MCF 10A (cell line): ENCODE measurements at regions of chr1 and their contacts with region 1.

Region 1: DNA sequence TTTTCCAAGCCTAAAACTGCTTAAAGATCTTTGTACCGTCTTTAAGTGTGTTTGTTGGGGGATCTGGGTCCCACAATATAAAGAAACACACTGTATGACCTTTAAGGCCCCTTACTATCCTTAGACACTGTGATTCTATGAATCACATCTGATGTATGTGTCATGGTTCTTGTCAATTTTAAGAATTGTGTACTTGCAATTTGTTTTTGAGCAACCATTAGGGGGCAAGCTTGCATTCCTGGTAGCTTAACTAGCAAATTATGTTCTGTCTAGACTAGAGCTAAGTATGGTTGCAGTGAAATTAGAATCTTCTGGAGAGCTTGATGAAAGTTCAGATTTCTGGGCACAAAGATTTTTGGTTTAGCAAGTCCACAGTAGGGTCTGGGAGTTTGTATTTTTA is 219.5 kb downstream of the TPR start:
- DNase-seq: peak; percentile 83
- H3K4me3 Mint-ChIP-seq: no peak overlapping the region
- H3K27ac Mint-ChIP-seq: no peak overlapping the region
- H3K4me1 Mint-ChIP-seq: peaks cover 13% of the 10 kb centered on the region
- H3K27me3 Mint-ChIP-seq: no peaks in the 10 kb centered on the region
- CTCF ChIP-seq: peak; percentile 57

Region 2: GRCh38 chr1:185813401-185813979 is 342.1 kb before region 1 on chr1:
- CTCF ChIA-PET with region 1: interaction called, 19 read pairs
- POLR2A ChIA-PET with region 1: interaction called, 4 read pairs
- intact Hi-C with region 1: loop called (anchors 1 kb)
- DNase-seq: peak; percentile 80
- H3K4me3 Mint-ChIP-seq: no peak overlapping the region
- H3K27ac Mint-ChIP-seq: no peak overlapping the region
- H3K4me1 Mint-ChIP-seq: no peaks in the 10 kb centered on the region
- H3K27me3 Mint-ChIP-seq: no peaks in the 10 kb centered on the region
- CTCF ChIP-seq: peak; percentile 68

Region 3: DNA sequence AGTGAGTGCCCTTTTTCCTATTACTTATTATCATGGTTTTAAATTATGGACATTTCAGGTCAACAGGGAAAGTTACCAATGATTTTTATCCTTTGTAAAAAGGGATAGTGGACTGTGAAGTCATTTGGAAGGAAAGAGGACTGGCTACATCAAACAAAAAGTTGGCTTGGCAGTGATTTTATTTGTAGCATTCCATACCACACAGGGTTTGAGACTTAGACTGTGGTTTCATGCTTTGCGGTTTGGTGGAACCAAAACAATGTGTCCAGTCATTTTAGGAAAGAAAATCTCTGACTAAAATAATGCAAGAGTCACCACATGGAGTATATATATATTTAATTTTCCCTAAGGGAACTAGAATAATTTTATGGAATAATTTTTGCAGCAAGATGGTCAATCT is 181.9 kb before region 1 on chr1:
- CTCF ChIA-PET with region 1: no interaction called
- POLR2A ChIA-PET with region 1: no interaction called
- intact Hi-C with region 1: no loop called
- DNase-seq: peak; percentile 79
- H3K4me3 Mint-ChIP-seq: no peak overlapping the region
- H3K27ac Mint-ChIP-seq: no peak overlapping the region
- H3K4me1 Mint-ChIP-seq: peaks cover 27% of the 10 kb centered on the region
- H3K27me3 Mint-ChIP-seq: peaks cover 12% of the 10 kb centered on the region
- CTCF ChIP-seq: no peak

Region 4: GRCh38 chr1:186178426-186179043 is 22.9 kb after region 1 on chr1:
- CTCF ChIA-PET with region 1: interaction called, 25 read pairs
- POLR2A ChIA-PET with region 1: interaction called, 5 read pairs
- intact Hi-C with region 1: no loop called
- DNase-seq: peak; percentile 82
- H3K4me3 Mint-ChIP-seq: no peak overlapping the region
- H3K27ac Mint-ChIP-seq: peak overlapping the region; percentile 9
- H3K4me1 Mint-ChIP-seq: peaks cover 29% of the 10 kb centered on the region
- H3K27me3 Mint-ChIP-seq: no peaks in the 10 kb centered on the region
- CTCF ChIP-seq: no peak

Region 5: DNA sequence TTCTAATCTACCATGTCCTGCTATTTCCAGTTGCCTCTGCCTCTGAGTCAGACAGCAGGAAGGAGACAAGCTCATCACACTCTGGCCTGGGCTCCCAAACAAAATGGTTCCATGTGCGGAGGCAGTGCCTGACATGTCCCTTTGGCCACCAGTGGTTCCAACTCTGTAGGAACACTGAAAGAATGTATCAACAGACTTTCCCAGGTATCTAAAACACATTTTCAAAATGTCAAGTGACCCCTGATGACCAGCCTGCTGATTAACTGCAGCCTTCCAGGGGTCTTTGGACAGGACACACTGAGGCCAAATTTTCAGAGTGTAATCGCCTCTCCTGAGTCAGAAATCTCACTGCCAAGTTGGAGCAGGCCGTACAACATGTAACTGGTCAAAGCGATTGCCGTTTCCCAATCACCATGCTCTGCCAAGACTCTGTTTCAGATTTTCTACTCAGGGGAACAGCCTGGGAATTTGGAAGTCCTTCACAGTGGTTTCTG is 46.7 kb after region 1 on chr1:
- CTCF ChIA-PET with region 1: interaction called, 73 read pairs
- POLR2A ChIA-PET with region 1: interaction called, 3 read pairs
- intact Hi-C with region 1: no loop called
- DNase-seq: no peak
- H3K4me3 Mint-ChIP-seq: no peak overlapping the region
- H3K27ac Mint-ChIP-seq: no peak overlapping the region
- H3K4me1 Mint-ChIP-seq: no peaks in the 10 kb centered on the region
- H3K27me3 Mint-ChIP-seq: no peaks in the 10 kb centered on the region
- CTCF ChIP-seq: no peak

Region 6: DNA sequence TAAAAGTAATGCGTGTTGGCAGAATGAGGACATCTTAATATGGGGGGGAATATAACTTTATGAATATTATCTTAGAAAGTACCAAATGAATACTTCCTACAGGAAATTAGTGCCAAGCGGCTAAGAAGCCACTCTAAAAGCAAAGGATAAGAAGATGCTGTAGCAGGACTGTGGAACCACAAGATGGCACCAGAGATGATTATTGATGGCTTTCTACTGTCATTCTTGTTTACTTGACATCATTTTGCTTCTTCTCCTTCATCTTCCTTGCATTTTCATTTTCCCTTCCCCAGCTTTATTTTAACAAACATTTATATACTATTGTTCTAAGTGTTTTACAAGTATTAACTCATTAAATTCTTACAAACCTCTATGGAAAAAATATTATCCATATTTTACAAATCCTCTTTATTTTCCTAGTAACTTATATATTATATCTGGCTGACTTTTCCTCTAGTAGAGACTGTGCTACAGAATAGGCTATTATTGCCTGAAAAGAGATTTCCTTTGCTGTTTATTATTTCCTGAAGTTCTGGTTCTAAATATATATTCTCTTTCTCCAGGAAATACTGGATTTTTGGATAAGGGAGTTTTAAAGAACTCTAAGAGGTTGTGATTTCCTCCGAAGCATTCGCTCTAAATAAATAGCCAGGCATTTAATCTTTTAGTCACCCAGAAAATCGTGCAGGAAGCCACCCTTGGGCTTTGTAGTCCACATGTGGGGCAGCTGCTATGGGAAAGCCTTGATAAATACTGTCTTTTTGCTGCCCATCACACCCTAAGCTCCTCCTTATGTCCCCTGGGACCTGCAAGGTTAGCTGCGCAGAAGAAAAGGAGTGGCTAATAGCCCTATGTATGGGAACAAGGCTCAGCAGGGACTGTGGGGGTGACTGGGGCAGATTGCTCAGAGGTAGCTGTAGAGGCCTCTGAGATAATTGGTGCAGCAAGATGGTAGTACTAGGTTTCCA is 149.7 kb after region 1 on chr1:
- CTCF ChIA-PET with region 1: interaction called, 5 read pairs
- POLR2A ChIA-PET with region 1: no interaction called
- intact Hi-C with region 1: loop called (anchors 5 kb)
- DNase-seq: peak; percentile 60
- H3K4me3 Mint-ChIP-seq: no peak overlapping the region
- H3K27ac Mint-ChIP-seq: no peak overlapping the region
- H3K4me1 Mint-ChIP-seq: no peaks in the 10 kb centered on the region
- H3K27me3 Mint-ChIP-seq: no peaks in the 10 kb centered on the region
- CTCF ChIP-seq: peak; percentile 61